Activated naive CD4-positive, alpha-beta T cell treated with anti-CD3 and anti-CD28 coated beads for 36 hours (primary cell): ENCODE measurements at regions of chr6 and their contacts with region 1.

Region 1: GRCh38 chr6:166627033-166627874 is at the start of gene RPS6KA2:
- DNase-seq: peak; percentile 100
- H3K4me3 Mint-ChIP-seq: peak within 1 kb of the TSS; percentile 89
- H3K27ac Mint-ChIP-seq: peak within 1 kb of the TSS; percentile 68
- H3K4me1 Mint-ChIP-seq: peaks cover 14% of the 10 kb centered on the region
- H3K27me3 Mint-ChIP-seq: peaks cover 26% of the 10 kb centered on the region
- total RNA-seq, gene RPS6KA2: 18.9 to 19.1 TPM

Region 2: DNA sequence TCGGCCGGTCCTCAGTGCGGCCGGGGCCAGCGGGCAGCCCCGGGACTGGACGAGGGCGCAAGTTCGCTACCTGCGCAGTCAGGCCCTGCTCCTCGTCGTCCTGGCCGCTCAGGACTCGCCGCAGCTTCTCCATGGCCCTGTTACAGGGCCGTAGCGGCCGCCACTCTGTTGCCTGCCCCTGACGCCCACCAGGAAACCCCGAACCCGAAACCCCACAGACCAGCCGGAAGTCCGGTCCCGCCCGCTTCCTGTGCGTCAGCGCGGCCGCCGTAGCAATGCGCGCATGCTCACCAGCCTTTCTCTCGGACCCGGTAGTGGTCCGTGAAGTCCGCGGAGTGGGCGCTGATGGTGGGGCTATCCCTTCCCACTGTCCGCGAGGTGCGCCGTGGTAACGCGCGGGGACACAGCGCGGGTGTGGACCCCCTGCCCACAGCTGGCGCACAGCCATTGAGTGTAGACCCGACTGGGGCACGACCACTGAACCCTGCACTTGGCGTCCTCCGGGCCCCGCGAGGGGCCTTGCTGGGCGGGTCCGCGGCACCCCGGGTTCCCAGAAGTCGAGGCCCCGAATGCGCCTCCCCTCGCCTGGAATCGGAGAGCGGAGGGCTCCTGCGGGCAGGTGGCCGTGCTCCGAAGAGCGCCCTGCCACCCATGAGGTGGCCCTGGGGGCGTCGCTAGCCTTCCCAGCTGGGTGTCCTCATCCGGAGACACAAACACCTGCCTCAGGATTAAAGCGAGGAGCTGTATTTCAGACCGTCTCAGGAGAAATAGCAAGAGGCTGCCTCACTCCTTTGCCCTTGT is 284.7 kb before region 1 on chr6 and contains the start of gene SFT2D1:
- CTCF ChIA-PET with region 1: no interaction called
- intact Hi-C with region 1: loop called (anchors 2 kb)
- DNase-seq: peak; percentile 74
- H3K4me3 Mint-ChIP-seq: peak within 1 kb of the TSS; percentile 83
- H3K27ac Mint-ChIP-seq: peak within 1 kb of the TSS; percentile 78
- H3K4me1 Mint-ChIP-seq: peaks cover 8% of the 10 kb centered on the region
- H3K27me3 Mint-ChIP-seq: no peaks in the 10 kb centered on the region
- total RNA-seq, gene SFT2D1: 53.1 to 53.3 TPM

Region 3: GRCh38 chr6:166419286-166419685 is 208.0 kb before region 1 on chr6:
- CTCF ChIA-PET with region 1: no interaction called
- intact Hi-C with region 1: loop called (anchors 1 kb)
- DNase-seq: peak; percentile 74
- H3K4me3 Mint-ChIP-seq: no peak overlapping the region
- H3K27ac Mint-ChIP-seq: peak overlapping the region; percentile 60
- H3K4me1 Mint-ChIP-seq: peaks cover 60% of the 10 kb centered on the region
- H3K27me3 Mint-ChIP-seq: no peaks in the 10 kb centered on the region

Region 4: DNA sequence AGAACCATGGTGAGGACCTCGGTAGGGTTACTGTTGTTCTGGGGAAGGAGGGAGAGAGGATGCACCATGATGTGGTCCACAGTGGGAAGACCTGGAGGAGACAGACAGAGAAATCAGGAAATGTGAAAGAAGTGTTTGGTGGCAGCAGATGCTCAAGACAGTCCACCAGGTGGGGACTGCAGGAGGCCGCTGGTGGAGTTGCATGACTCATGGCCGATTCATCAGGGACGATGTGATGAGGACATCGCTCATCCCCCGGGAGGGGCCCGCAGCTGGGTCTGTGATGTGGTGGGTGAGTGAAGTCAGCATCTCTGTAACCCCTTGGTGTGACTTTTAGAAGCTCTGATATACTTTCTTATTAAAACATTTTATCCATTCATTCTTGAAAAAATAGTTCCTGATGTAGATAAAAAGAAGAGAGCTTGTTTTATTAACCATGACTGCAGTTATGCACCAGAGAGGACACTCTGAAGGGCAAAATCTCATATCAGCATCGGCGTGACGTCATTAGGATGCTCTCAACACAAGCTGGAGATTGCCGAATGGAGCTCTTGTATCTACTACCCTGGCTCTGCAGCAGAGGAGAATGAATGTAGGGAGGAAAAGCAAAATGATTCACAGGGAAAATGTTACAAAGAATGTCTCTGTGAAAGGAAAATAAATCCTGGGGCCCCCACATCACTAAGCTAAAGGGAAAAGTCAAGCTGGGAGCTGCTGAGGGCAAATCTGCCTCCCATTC is 112.0 kb before region 1 on chr6:
- CTCF ChIA-PET with region 1: no interaction called
- intact Hi-C with region 1: loop called (anchors 1 kb)
- DNase-seq: peak; percentile 78
- H3K4me3 Mint-ChIP-seq: no peak overlapping the region
- H3K27ac Mint-ChIP-seq: no peak overlapping the region
- H3K4me1 Mint-ChIP-seq: peaks cover 11% of the 10 kb centered on the region
- H3K27me3 Mint-ChIP-seq: no peaks in the 10 kb centered on the region

Region 5: DNA sequence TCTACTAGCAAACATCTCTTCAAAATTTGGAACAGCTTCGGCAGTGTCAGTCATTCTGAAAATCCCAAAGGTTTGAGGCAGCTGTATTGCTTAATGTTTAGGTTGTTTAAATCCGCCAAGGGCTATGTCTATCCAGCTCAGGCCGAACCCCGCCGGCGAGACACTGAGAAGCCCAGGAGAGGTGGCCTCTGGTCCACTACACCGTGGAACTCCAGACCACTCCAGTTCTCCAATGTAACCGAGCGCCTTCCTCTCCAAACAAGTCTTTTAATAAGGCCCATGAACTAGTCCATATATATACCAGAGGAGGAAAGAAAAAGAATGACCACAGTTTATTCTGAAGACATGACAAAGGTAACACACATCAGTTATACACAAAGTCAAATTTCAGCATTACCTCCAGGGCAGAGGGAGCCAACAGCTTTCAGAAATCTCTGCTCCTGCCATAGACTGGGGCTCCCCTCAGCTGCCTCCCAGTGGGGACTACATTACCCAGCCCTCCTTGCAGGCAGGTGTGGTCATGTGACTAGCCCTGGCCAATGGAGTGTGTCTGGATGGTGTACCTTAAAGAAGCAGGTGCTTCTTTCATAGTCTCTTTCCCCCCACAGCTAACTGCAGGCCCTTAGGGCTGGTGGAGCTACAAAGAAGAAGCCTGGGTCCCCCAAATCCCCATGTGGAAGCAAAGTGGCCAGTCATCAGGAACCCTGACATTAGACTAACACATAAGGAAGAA is 40.7 kb before region 1 on chr6 and contains the start of gene RAMACL:
- CTCF ChIA-PET with region 1: no interaction called
- intact Hi-C with region 1: loop called (anchors 1 kb)
- DNase-seq: peak; percentile 59
- H3K4me3 Mint-ChIP-seq: no peak within 1 kb of the TSS
- H3K27ac Mint-ChIP-seq: no peak within 1 kb of the TSS
- H3K4me1 Mint-ChIP-seq: peaks cover 23% of the 10 kb centered on the region
- H3K27me3 Mint-ChIP-seq: no peaks in the 10 kb centered on the region
- total RNA-seq, gene RAMACL: 0.52 to 0.89 TPM

Region 6: DNA sequence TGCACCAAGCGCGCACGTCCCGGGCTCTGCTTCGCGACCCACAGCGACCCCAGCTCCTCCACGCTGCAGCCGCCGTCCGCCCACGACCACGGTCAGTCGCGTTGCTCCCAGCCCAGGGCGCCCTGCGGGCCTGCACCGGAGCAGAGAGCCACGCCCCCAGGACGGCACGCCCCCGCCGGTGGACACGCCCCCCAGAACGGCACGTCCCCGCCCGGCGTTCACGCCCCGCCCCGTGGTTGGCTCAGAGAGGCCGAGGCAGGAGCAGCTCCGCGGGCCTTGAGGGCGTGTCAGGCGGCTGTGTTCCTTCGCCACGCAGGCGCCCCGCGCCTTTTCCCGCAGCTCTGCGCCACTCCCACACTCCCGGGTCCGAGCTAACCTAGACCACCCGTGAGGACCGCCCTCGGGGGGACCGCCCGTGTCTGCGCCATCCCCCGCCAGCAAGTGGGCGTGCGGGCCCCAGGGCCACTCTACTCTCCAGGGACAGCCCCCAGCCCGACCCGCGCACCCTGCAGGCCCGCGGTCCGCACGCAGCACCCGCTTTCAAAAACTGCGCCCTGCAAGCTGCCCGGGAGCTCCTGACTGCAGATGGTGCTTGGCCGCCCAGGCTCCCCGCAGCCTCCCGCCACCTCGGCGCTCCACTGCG is 329.3 kb after region 1 on chr6 and contains the start of gene RNASET2:
- CTCF ChIA-PET with region 1: no interaction called
- intact Hi-C with region 1: loop called (anchors 1 kb)
- DNase-seq: peak; percentile 99
- H3K4me3 Mint-ChIP-seq: peak within 1 kb of the TSS; percentile 86
- H3K27ac Mint-ChIP-seq: peak within 1 kb of the TSS; percentile 95
- H3K4me1 Mint-ChIP-seq: peaks cover 71% of the 10 kb centered on the region
- H3K27me3 Mint-ChIP-seq: no peaks in the 10 kb centered on the region
- total RNA-seq, gene RNASET2: 74.1 to 75.6 TPM

Region 7: GRCh38 chr6:167047554-167047953 is 420.3 kb after region 1 on chr6:
- CTCF ChIA-PET with region 1: no interaction called
- intact Hi-C with region 1: loop called (anchors 5 kb)
- DNase-seq: peak; percentile 84
- H3K4me3 Mint-ChIP-seq: peak overlapping the region; percentile 41
- H3K27ac Mint-ChIP-seq: peak overlapping the region; percentile 61
- H3K4me1 Mint-ChIP-seq: peaks cover 27% of the 10 kb centered on the region
- H3K27me3 Mint-ChIP-seq: no peaks in the 10 kb centered on the region